ENCODE measurements at regions of chr2 and their contacts with region 1.

Region 1: DNA sequence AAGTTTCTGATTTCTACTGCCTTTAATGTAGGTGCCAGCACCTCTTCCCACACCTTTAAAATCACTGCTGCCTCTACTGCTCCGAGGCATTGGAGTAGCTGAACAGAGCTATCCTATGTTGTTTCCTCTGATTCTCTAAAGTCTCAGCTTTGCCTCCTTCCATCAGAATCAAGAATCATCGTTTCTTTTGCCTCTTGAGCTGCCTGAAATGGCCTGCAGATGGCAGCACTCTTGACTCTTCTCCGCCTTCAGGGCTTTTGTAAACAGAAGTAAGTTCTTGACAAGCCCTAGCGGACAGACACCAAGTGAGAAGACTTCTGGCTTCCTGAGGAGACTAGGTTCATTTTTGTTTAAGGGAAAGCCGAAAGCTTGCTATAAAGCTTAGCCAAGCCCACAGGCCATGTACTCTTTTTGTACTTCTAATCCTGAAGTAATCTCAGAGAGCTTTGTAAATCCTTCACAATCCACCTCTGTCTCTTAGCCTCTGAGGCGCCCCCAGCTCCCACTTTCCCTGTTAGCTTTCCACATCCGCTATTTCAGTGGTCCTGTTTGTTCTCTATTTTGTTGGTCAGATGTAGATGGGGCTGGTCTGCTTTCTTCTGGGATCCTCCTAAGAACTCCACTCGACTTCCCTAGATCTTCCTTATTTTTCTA is 48.4 kb downstream of the GTF3C3 start:
- DNase-seq: peak; percentile 84
- ATAC-seq: peak; percentile 85
- H3K4me3 ChIP-seq: no peak overlapping the region
- H3K27ac ChIP-seq: no peak overlapping the region
- H3K4me1 ChIP-seq: no peaks in the 10 kb centered on the region
- H3K27me3 ChIP-seq: no peaks in the 10 kb centered on the region
- CTCF ChIP-seq: peak; percentile 92

Region 2: GRCh38 chr2:196441527-196441926 is 309.6 kb before region 1 on chr2:
- CTCF ChIA-PET with region 1: no interaction called
- POLR2A ChIA-PET with region 1: no interaction called
- intact Hi-C with region 1: no loop called
- DNase-seq: no peak
- ATAC-seq: no peak
- H3K4me3 ChIP-seq: no peak overlapping the region
- H3K27ac ChIP-seq: no peak overlapping the region
- H3K4me1 ChIP-seq: no peaks in the 10 kb centered on the region
- H3K27me3 ChIP-seq: peaks cover 4% of the 10 kb centered on the region; the same call in 1 of the 2 replicates
- CTCF ChIP-seq: no peak

Region 3: DNA sequence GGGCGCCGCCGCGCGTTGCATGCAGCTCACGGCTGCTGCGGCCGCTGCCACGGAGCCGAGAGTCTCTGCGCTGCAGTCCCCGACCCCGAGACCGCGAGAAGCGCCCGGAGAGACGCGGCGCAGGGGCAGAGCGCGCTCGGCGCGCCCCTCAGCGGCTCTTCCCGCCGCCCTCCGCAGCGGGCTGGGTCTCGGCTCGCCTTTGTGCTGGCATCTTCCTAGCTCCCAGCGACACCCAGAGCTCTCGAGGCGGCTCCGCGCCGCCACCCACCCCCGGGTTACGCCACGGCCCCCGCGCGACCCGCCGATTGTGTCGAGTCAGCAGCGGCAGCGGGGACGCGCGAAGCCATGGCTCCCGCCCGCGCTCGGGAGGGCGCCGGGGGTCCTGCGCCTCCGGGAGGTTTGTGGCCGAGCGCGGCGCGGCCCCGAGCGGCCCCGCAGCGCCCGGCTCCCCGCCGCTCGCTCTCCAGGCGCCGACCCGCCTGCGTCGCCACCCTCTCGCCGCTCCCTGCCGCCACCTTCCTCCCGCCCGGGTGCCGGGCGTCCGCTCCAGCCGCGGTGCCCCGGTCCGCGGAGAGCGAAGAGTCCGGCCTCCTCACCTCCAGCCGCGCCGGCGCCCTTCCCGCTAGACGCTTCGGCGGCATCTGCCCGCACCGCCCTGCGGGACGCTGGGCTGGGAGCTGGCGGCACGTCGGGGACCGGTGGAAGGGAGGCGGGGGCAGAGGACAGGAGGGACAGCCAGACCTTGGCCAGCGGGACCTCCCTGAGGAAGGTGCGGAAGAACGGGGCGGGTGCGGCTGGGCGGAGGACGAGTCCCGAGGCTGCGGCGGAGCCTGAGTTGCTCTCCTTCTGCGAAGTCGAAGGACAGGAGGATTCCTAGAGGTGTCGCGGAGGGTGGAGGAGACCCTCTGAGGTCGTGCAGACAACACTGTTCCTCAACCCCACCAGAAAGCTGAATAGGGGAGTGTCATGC is 157.9 kb before region 1 on chr2:
- CTCF ChIA-PET with region 1: no interaction called
- POLR2A ChIA-PET with region 1: no interaction called
- intact Hi-C with region 1: loop called (anchors 10 kb)
- DNase-seq: peak; percentile 25
- ATAC-seq: peak; percentile 76
- H3K4me3 ChIP-seq: peak within 1 kb of the TSS; percentile 77
- H3K27ac ChIP-seq: no peak within 1 kb of the TSS
- H3K4me1 ChIP-seq: peaks cover 5% of the 10 kb centered on the region
- H3K27me3 ChIP-seq: peaks cover 6% of the 10 kb centered on the region
- CTCF ChIP-seq: no peak

Measured in PC-3 (cell line).